ENCODE measurements at regions of chr14 and their contacts with region 1.

Region 1: DNA sequence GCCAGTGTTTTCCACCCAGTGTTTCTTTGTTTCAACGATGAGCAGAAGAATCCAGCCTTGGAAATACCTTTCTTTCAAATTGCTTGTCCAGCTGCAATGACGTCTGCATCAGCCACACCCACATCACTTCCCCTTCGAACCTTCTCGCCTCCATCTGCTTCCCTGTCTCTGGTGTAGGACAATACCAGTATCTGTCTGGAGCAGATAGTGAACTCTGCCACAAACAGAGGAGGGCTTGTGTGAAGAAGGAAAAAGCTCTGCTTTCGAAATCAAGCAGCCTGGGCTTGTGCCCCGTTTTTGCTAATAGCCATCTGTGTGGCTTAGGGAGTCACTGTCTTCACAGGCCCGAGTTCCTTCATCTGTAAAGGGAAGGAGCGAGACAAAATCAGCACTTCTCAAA is 415.4 kb downstream of the ZFP36L1 start:
- DNase-seq: peak; percentile 56
- H3K4me3 ChIP-seq: peak overlapping the region; percentile 1
- H3K27ac ChIP-seq: peak overlapping the region; percentile 4
- H3K4me1 ChIP-seq: peaks cover 69% of the 10 kb centered on the region
- CTCF ChIP-seq: no peak

Region 2: GRCh38 chr14:68292441-68293215 is 84.8 kb before region 1 on chr14:
- CTCF ChIA-PET with region 1: no interaction called
- POLR2A ChIA-PET with region 1: interaction called, 10 read pairs
- intact Hi-C with region 1: no loop called
- DNase-seq: no peak
- H3K4me3 ChIP-seq: peak overlapping the region; percentile 31
- H3K27ac ChIP-seq: peak overlapping the region; percentile 81
- H3K4me1 ChIP-seq: peaks cover 64% of the 10 kb centered on the region
- CTCF ChIP-seq: no peak

Region 3: DNA sequence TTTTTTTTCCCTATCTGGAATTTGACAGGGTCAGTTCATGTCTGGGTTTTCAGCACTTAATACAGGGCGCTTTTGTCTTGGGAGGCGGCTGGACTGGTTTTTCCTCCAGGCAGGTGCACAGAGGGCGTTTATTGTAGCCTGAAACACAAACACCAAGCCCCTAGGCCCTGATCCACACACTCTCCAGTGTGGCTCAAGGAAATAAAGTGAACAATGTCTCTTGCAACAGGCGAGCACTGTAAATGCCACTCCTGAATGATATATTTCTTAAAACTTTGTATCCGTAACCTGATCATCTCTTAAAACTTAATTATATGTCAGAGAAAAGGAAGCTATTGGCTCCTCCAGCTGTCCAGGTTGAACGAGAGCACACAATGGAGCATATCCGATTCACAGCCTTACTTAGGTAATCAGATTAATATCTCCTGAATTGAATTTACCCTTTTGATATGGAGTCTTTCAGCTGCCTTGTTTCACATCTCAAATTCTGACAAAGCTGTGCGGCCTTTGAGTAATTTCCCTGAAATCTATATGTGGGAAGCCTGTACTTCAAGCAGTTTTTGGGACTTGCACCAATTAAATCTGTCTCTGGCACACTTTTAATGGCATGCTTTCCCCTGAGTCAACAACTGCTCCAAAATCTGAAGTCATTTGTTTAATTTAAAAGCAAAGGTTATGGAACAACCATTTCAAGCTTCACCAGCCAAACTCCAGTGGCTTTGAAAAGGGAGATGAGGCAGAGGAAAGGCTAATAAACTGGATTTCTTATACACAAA is 70.3 kb before region 1 on chr14:
- CTCF ChIA-PET with region 1: no interaction called
- POLR2A ChIA-PET with region 1: interaction called, 11 read pairs
- intact Hi-C with region 1: no loop called
- DNase-seq: no peak
- H3K4me3 ChIP-seq: no peak overlapping the region
- H3K27ac ChIP-seq: peak overlapping the region; percentile 49
- H3K4me1 ChIP-seq: peaks cover 64% of the 10 kb centered on the region
- CTCF ChIP-seq: no peak

Region 4: DNA sequence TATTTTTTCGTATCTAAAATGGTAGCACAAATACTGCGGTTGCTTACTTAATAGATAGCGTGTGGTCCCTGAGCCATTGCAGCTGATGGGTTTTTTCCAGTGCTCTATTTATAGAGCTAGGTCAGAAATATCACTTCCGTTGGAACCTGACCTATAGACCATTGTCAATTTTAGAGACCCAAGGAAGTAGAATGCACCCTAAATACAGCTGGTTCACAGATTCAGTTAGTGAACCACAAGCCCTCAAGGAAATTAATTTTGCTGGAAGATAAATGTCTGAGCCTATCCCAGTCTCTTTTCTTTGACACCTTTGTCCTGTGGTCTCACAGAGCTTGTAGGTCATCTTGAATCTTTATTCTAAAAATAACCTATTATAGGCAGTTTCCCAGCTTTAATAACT is 24.4 kb after region 1 on chr14:
- CTCF ChIA-PET with region 1: interaction called, 3 read pairs
- POLR2A ChIA-PET with region 1: interaction called, 19 read pairs
- intact Hi-C with region 1: no loop called
- DNase-seq: peak; percentile 73
- H3K4me3 ChIP-seq: no peak overlapping the region
- H3K27ac ChIP-seq: peak overlapping the region; percentile 1
- H3K4me1 ChIP-seq: peaks cover 63% of the 10 kb centered on the region
- CTCF ChIP-seq: no peak

Region 5: DNA sequence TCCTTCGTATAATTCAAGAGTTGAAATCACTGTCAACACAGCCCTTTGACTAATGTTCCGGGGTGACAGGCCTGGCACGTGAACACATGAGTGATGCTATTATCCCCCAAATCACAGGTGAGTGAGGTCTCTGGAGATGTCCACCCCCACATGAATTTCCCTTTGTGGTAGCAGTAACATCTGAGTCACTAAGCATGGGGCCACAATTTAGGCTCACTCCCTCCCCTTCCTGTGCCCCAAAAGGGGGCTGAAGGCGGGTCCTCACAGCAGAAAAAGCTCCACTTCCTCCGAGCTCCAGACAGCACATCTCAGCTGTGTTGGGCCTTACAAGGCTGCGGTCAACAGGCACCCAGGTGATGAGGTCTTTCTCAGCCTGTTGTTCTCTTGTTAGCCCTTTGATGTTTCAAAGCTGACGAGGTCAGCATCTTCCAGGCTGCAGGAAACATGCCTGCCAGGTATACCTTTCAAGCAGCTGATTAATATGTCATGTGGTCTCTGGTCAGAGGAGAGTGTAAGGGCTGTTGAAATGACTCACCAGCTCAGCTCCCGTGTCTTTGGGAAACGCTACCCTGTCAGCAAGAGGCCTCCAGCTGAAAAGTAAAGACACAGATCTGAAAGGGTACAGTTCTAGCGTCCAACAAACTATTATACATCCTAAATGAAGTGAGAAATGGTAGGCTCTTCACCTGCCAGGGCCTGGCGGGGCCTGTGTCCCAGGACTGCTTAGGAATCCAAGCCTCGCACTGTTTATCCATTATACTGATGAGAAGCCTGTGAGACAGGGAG is 308.2 kb after region 1 on chr14:
- CTCF ChIA-PET with region 1: no interaction called
- POLR2A ChIA-PET with region 1: interaction called, 8 read pairs
- intact Hi-C with region 1: loop called (anchors 2 kb)
- DNase-seq: peak; percentile 98
- H3K4me3 ChIP-seq: peak overlapping the region; percentile 57
- H3K27ac ChIP-seq: peak overlapping the region; percentile 97
- H3K4me1 ChIP-seq: peaks cover 98% of the 10 kb centered on the region
- CTCF ChIP-seq: no peak

Region 6: GRCh38 chr14:68795597-68796417 is 418.3 kb after region 1 on chr14:
- CTCF ChIA-PET with region 1: no interaction called
- POLR2A ChIA-PET with region 1: interaction called, 11 read pairs
- intact Hi-C with region 1: no loop called
- DNase-seq: peak; percentile 90
- H3K4me3 ChIP-seq: peak overlapping the region; percentile 87
- H3K27ac ChIP-seq: peak overlapping the region; percentile 92
- H3K4me1 ChIP-seq: peaks cover 39% of the 10 kb centered on the region
- CTCF ChIP-seq: peak; percentile 71